Activated naive CD8-positive, alpha-beta T cell treated with anti-CD3 and anti-CD28 coated beads, Interleukin-2, amount 10 ng/mL, durations not matched to agents 7 days and 5 days (primary cell): ENCODE measurements at regions of chr4 and their contacts with region 1.

Region 1: DNA sequence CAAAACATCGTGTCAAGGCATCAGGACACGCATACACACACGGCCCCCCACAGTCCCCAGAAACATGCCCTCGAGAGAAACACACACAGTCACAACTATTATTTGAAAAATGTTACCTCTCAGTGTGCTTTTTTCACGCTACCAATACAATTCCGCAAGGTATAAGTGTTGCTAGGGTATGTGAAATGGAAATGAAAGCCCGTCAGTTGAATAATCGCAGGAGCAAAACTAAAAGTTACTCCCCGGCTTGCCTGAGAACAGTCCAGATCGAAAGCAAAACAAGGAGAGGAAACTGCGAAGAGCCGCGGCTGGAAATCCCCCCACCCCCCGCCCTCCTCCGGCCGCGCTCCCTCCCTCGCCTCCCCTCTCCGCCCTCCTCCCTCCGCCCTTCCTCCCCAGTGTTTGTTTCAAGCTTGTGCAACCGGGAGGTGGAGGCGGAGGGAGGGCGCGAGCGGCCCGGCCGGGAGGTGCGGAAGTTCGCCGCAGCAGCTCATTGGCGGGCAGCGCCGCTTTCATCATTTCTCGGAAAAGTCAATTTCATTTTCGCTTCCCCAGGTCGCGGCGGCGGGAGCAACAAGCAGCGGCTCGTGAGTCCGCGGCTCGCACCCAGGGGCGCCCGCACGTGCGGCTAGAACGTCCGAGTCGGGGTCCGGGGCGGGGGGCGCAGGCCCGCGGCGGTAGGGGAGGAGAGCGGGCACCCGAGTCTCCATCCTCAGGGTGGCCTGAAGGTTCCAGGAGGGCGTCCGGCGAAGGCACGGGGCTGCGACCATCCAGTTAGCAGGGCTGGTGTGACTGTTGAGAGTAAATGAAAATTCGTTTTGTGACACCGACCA is at the start of gene IRF2:
- DNase-seq: peak; percentile 91
- ATAC-seq: peak; percentile 77
- H3K4me3 Mint-ChIP-seq: peak within 1 kb of the TSS; percentile 93
- H3K27ac Mint-ChIP-seq: peak within 1 kb of the TSS; percentile 96
- H3K4me1 Mint-ChIP-seq: peaks cover 50% of the 10 kb centered on the region
- H3K27me3 Mint-ChIP-seq: no peaks in the 10 kb centered on the region
- total RNA-seq, gene IRF2: 72.0 to 73.2 TPM

Region 2: GRCh38 chr4:184282251-184282713 is 192.2 kb before region 1 on chr4:
- POLR2A ChIA-PET with region 1: interaction called, 17 read pairs
- DNase-seq: peak; percentile 61
- ATAC-seq: peak; percentile 83
- H3K4me3 Mint-ChIP-seq: no peak overlapping the region
- H3K27ac Mint-ChIP-seq: peak overlapping the region; percentile 80
- H3K4me1 Mint-ChIP-seq: peaks cover 40% of the 10 kb centered on the region
- H3K27me3 Mint-ChIP-seq: no peaks in the 10 kb centered on the region

Region 3: GRCh38 chr4:184384056-184384809 is 90.2 kb before region 1 on chr4:
- POLR2A ChIA-PET with region 1: interaction called, 11 read pairs
- DNase-seq: peak; percentile 48
- ATAC-seq: peak; percentile 69
- H3K4me3 Mint-ChIP-seq: peak overlapping the region; percentile 70
- H3K27ac Mint-ChIP-seq: peak overlapping the region; percentile 85
- H3K4me1 Mint-ChIP-seq: peaks cover 53% of the 10 kb centered on the region
- H3K27me3 Mint-ChIP-seq: no peaks in the 10 kb centered on the region

Region 4: GRCh38 chr4:184417802-184418511 is 56.5 kb before region 1 on chr4:
- POLR2A ChIA-PET with region 1: interaction called, 22 read pairs
- DNase-seq: no peak
- ATAC-seq: peak; percentile 81
- H3K4me3 Mint-ChIP-seq: peak overlapping the region; percentile 88
- H3K27ac Mint-ChIP-seq: peak overlapping the region; percentile 99
- H3K4me1 Mint-ChIP-seq: peaks cover 60% of the 10 kb centered on the region
- H3K27me3 Mint-ChIP-seq: no peaks in the 10 kb centered on the region

Region 5: DNA sequence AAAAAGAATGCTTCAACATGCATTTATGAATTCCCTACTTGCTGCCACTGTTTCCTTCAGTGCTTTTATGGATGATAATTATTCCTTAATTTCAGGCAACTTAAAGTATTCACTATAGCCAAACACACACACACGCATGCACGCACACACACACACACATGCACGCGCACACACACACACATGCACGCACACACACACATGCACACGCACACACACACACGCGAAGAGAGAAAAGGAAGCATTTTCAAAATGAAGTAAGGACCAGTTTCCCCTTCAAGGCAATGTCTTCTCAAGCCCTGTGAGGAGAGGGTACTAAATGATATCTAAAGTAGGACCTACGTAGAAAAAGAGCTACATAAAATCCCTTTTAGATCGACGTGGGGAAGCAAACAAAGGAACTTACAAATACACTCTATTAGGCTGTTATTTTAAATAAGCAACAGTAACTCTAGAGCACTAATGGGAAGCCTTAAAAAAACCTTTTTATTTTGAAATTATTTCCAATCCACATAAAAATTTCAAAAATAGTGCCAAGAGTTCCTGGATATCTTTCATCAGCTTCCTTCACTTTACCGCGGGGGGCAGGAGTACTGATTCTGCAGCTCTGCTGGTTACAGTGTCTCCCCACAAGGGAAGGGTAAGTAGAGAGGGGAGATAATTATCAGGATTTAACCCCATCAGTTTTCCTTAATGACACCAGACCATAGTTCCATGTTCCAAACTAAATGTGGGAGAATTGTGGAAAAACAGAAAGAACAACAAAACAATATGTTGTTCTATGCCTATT is 13.8 kb before region 1 on chr4:
- POLR2A ChIA-PET with region 1: no interaction called
- DNase-seq: no peak
- ATAC-seq: no peak
- H3K4me3 Mint-ChIP-seq: peak overlapping the region; percentile 14
- H3K27ac Mint-ChIP-seq: no peak overlapping the region
- H3K4me1 Mint-ChIP-seq: peaks cover 46% of the 10 kb centered on the region
- H3K27me3 Mint-ChIP-seq: no peaks in the 10 kb centered on the region

Region 6: DNA sequence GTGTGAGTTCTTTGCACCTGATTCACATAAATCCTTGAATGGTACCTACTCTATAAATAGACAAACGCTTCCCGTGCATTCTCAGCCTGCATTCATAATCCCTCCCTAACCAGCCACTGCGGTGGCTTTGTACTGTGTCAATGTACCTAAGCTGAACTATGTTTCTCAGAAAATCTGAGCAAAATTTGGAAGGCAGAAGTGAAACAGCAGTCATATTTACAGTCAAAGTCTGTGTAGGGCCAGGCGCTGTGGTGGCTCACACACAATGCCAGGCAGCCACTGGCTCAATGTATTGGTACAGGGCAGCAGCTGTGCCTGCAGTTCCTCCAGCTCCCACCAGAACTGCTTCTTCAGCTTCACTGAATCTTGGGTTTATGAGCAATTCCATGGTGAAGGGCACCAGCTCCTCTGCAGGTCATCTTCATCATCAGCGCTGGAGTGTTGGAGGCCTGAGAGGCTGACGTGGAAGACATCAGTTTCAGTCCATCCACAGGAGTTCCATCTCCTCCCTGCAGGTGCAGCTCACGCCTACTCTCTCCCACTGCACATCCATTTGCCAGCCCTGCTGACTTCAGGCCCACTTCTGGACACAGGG is 32.1 kb after region 1 on chr4:
- POLR2A ChIA-PET with region 1: interaction called, 11 read pairs
- DNase-seq: peak; percentile 43
- ATAC-seq: peak; percentile 89
- H3K4me3 Mint-ChIP-seq: peak overlapping the region; percentile 44
- H3K27ac Mint-ChIP-seq: peak overlapping the region; percentile 50
- H3K4me1 Mint-ChIP-seq: peaks cover 24% of the 10 kb centered on the region
- H3K27me3 Mint-ChIP-seq: no peaks in the 10 kb centered on the region

Region 7: DNA sequence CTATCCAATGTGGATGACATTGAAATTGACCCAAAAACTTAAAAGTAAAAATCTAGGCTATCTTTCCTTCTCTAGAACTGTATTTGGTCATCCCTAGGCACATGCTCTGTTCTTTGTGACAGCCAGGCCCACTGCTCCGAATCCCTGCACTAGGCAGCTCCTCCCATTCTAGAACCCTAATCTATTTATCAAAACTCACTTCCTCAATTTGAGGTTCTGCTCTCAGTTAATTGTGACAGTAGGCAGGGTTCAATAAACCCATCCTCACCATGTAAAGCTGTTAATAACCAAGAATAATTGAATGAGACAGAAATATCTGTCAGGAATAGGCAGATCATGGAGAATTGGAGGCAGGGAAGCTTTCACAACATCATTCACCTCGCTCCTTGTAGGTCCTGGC is 51.7 kb after region 1 on chr4:
- POLR2A ChIA-PET with region 1: interaction called, 10 read pairs
- DNase-seq: no peak
- ATAC-seq: no peak
- H3K4me3 Mint-ChIP-seq: no peak overlapping the region
- H3K27ac Mint-ChIP-seq: no peak overlapping the region
- H3K4me1 Mint-ChIP-seq: peaks cover 20% of the 10 kb centered on the region
- H3K27me3 Mint-ChIP-seq: no peaks in the 10 kb centered on the region

Region 8: DNA sequence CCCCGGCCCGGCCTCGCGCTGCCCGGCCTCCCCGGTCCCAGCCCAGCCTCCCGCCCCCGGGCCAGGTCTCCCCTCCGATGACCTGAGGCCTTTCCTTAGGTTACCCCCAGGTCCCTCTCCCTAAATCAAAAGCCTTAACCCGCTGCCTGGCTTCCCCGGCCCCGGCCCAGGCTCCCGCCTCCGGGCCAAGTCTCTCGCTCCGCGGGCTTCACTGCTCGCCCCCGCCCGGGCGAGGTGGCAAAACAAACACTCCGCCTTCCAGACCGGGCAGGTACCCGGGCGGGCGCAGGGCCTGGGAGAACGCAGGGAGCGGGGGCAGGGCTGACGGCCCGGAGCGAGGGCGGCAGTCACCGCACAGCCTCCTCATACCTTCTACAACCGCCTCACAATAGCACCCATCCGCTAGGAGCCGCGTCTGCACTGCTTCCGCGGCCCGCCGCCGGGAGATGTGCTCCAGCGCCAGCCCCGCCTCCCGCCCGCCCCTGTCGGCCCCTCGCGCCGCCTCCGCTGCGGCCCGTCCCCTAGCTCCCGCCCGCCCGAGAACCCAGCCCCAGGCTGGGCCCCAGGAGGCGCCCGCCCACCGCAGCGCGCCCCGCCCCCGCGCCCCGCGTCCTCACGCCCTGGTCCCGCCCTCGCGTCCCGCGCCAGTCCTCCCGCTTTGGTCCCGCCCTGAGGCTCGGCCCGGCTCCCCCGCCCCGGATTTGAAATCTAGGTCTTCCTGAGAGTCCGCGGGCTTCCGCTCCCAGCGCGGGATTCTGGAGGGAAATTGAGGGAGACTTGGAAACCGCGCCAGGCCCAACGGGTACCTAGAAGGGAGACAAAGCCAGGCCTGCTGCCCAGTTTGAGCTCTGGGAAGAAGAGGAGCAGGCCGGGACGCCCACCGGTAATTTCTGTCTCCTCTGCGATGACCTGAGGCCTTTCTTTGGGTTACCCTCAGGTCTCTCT is 174.8 kb after region 1 on chr4 and contains the starts of genes CASP3 and PRIMPOL:
- POLR2A ChIA-PET with region 1: interaction called, 14 read pairs
- DNase-seq: peak; percentile 99
- ATAC-seq: peak; percentile 89
- H3K4me3 Mint-ChIP-seq: peak within 1 kb of the TSS; percentile 98
- H3K27ac Mint-ChIP-seq: peak within 1 kb of the TSS; percentile 96
- H3K4me1 Mint-ChIP-seq: peaks cover 53% of the 10 kb centered on the region
- H3K27me3 Mint-ChIP-seq: no peaks in the 10 kb centered on the region
- total RNA-seq, gene CASP3: 45.3 to 49.8 TPM
- total RNA-seq, gene PRIMPOL: 22.5 to 25.0 TPM